Activated CD8-positive, alpha-beta T cell treated with anti-CD3 and anti-CD28 coated beads, Interleukin-2, amount 10 ng/mL, durations not matched to agents 7 days and 5 days (primary cell): ENCODE measurements at regions of chr10 and their contacts with region 1.

Region 1: GRCh38 chr10:42753126-42753506 is 29.5 kb upstream of the BMS1 start:
- DNase-seq: peak; percentile 67
- ATAC-seq: peak; percentile 76
- H3K4me3 Mint-ChIP-seq: peak overlapping the region; percentile 74
- H3K27ac Mint-ChIP-seq: no peak overlapping the region
- H3K4me1 Mint-ChIP-seq: peaks cover 11% of the 10 kb centered on the region
- H3K27me3 Mint-ChIP-seq: peaks cover 42% of the 10 kb centered on the region

Region 2: GRCh38 chr10:43105102-43105785 is 352.1 kb after region 1 on chr10:
- CTCF ChIA-PET with region 1: interaction called, 12 read pairs
- POLR2A ChIA-PET with region 1: no interaction called
- DNase-seq: peak; percentile 79
- ATAC-seq: peak; percentile 91
- H3K4me3 Mint-ChIP-seq: peak overlapping the region; percentile 66
- H3K27ac Mint-ChIP-seq: no peak overlapping the region
- H3K4me1 Mint-ChIP-seq: peaks cover 35% of the 10 kb centered on the region
- H3K27me3 Mint-ChIP-seq: peaks cover 26% of the 10 kb centered on the region